Activated naive CD8-positive, alpha-beta T cell treated with anti-CD3 and anti-CD28 coated beads, Interleukin-2, amount 10 ng/mL, durations not matched to agents 7 days and 5 days (primary cell): ENCODE measurements at regions of chr21 and their contacts with region 1.

Region 1: GRCh38 chr21:32597205-32597604 is 11.9 kb upstream of the TCP10L start:
- DNase-seq: no peak
- ATAC-seq: no peak
- H3K4me3 Mint-ChIP-seq: no peak overlapping the region
- H3K27ac Mint-ChIP-seq: no peak overlapping the region
- H3K4me1 Mint-ChIP-seq: peaks cover 4% of the 10 kb centered on the region
- H3K27me3 Mint-ChIP-seq: no peaks in the 10 kb centered on the region

Region 2: DNA sequence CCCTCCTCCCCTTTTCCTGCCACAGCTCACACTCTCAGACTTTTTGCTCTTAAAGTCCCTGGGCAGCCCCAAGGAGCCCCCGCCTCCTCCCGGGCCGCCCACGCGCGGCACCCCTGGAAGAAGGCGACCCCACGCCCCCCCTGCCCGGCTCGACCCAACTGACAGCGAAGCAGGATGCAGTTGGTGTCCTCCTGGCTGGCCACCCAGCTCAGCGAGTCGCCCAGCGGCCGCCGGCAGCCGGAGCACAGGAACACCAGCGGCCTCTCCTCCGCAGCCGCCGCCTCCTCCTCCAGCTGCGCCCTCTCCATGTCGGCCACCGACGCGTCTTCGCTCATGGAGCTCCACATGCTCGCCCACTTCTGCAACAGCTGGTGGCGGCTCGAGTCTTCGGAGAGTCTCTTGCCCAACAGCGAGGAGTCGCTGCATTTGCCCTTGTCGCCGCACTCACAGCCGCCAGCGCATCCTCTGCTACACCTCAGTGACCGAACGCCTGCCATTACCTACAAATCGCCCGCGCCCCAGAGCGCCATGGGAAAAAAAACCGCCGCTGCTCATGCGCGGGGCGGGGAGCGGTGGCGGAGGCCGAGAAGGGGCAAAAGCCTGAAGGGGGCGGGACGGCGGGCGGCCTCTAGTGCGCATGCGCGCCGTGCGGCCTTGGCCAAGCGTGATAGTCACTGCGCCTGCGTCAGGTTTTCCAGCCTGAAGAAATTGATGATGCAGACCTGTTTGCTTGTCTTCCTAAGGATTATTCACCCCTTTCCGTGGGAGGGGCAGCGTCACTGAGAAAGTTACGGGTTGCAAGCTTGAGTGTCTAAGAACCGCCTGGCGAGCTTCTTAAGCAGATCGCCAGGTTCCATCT is 318.5 kb before region 1 on chr21 and contains the start of gene MIS18A:
- POLR2A ChIA-PET with region 1: interaction called, 10 read pairs
- DNase-seq: peak; percentile 98
- ATAC-seq: peak; percentile 90
- H3K4me3 Mint-ChIP-seq: peak within 1 kb of the TSS; percentile 98
- H3K27ac Mint-ChIP-seq: peak within 1 kb of the TSS; percentile 96
- H3K4me1 Mint-ChIP-seq: peaks cover 13% of the 10 kb centered on the region
- H3K27me3 Mint-ChIP-seq: no peaks in the 10 kb centered on the region
- total RNA-seq, gene MIS18A: 19.7 to 21.2 TPM

Region 3: DNA sequence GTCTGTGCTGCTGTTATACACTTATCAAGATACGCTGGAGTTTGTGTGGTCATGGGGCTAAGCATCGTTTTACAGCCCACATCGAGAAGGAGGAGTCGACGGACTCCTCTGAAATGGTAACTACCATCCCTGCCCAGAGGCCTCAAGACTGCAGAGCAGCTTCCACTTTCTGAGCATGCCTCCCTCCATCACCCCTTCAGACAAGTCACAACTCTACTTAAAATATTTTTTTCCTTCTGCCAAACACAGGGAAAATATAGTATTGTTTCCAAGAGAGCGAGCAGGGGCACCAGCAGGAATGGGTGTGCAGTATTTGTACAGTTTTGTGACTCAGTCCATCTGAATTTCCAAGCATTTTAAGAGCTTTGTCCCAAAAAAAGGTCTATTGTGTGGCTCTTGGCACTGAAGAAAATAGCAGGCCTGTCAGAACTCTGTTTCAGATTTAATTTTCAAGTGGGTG is 170.6 kb before region 1 on chr21:
- POLR2A ChIA-PET with region 1: no interaction called
- DNase-seq: no peak
- ATAC-seq: no peak
- H3K4me3 Mint-ChIP-seq: no peak overlapping the region
- H3K27ac Mint-ChIP-seq: no peak overlapping the region
- H3K4me1 Mint-ChIP-seq: no peaks in the 10 kb centered on the region
- H3K27me3 Mint-ChIP-seq: no peaks in the 10 kb centered on the region